GM12878 (cell line): ENCODE measurements at regions of chr1 and their contacts with region 1.

Region 1: DNA sequence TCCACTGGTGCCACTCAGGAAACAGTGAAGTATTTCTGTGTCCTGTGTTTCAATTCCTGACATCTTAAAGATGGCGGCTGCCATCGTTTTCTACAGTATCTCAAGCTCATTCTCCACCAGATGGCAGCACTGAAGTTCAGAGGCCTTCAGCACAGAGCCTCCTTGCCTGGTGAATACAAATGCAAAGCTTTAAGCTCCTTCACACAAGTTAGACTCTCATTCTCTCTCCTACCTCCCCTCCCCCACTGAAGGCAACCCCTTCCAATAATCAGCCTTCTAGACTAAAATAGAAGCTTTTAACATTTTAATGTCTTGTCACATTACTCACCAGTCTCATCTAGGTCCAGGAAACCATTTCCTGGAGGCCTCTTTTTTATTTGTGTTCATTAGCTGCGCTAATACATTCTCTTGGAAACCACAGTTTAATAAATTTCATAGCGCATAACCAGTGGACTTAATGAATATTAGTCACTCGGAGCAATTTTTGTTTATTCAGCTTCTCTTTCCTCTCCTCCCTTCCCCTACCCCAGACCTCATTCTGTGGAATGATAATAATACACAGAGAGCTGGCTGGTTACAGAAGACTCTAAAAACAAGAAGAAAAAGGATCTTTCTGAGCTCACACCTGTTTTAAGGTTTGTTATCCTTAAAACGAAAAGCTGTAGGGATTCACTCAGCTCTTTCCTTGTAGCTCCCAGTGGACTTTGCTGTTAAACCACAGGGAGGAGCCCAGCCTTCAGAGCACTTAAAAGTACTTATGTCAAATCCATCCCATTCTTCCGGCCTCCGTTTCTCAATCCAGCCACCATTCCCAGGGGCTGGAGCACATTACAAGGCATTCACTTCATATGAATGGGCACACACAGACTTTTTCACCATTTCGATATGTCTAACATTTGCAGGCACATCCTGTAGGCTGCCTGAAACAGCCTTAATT is 384.9 kb downstream of the HLX start:
- DNase-seq: peak; percentile 5
- ATAC-seq: peak; percentile 97
- H3K4me3 ChIP-seq: no peak overlapping the region
- H3K27ac ChIP-seq: no peak overlapping the region
- H3K4me1 ChIP-seq: no peaks in the 10 kb centered on the region
- H3K27me3 ChIP-seq: no peaks in the 10 kb centered on the region
- CTCF ChIP-seq: peak; percentile 47 to 57 (median 51); a peak in 5 of 6 replicates
- EP300 ChIP-seq: no peak
- POLR2A ChIP-seq: no peak
- RAD21 ChIP-seq: peak; percentile 51

Region 2: GRCh38 chr1:221246628-221247415 is 17.3 kb before region 1 on chr1:
- CTCF ChIA-PET with region 1: interaction called, 11 read pairs
- POLR2A ChIA-PET with region 1: no interaction called
- RAD21 ChIA-PET with region 1: interaction called, 4 read pairs
- SMC1A ChIA-PET with region 1: interaction called, 9 read pairs
- in situ Hi-C with region 1: no loop called
- intact Hi-C with region 1: no loop called
- DNase-seq: no peak
- ATAC-seq: no peak
- H3K4me3 ChIP-seq: no peak overlapping the region
- H3K27ac ChIP-seq: no peak overlapping the region
- H3K4me1 ChIP-seq: no peaks in the 10 kb centered on the region
- H3K27me3 ChIP-seq: no peaks in the 10 kb centered on the region
- CTCF ChIP-seq: no peak
- EP300 ChIP-seq: no peak
- POLR2A ChIP-seq: no peak
- RAD21 ChIP-seq: no peak